ENCODE measurements at regions of chr12 and their contacts with region 1.

Region 1: DNA sequence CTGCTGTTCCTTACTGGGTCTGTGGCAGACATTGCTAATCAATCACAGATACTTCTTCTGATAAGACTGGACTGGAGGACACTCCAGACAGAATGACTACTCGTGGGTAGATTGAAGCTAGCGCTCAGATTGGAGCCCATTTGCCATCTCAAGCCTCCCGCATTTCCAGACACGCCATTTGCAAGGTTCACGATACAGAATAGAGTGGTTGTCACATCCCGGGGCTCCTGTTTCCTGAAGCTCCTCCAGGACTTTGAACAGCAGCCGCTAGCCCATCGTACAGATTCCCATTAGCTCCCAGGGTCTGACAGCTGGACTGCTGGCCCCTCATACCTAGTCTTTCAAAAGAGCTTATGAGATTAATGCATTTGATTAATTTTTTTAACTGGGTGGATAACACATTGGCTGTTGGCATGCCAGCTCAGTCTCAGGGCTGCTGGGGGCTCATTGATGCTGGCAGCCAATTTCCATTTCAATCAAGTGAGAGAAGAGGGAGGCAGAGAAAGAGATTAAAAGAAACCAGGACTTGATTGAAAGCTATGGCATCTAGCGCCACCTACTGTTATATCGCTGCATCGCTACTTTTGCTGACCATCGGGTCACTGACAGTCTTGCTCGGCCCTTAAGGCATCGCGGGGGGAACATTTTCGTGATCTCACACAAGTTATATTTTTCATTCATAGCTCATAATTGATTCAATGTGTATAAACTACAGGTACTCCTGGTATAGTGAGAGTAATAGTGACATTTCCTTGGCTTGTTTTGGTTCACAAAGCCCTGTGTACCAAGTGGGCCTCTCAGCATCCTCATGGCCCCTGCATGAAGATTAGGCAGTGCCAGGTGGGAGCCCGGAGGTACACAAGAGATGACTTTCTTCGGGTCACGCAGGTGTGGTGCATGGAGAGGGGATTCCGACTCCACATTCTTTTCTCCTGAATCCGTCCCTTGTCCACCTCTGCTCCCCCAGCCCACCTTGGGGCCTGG is 78.6 kb downstream of the CCDC60 start:
- DNase-seq: peak; percentile 6
- H3K4me3 Mint-ChIP-seq: no peak overlapping the region
- H3K27ac Mint-ChIP-seq: no peak overlapping the region
- H3K4me1 Mint-ChIP-seq: no peaks in the 10 kb centered on the region
- H3K27me3 Mint-ChIP-seq: no peaks in the 10 kb centered on the region

Region 2: DNA sequence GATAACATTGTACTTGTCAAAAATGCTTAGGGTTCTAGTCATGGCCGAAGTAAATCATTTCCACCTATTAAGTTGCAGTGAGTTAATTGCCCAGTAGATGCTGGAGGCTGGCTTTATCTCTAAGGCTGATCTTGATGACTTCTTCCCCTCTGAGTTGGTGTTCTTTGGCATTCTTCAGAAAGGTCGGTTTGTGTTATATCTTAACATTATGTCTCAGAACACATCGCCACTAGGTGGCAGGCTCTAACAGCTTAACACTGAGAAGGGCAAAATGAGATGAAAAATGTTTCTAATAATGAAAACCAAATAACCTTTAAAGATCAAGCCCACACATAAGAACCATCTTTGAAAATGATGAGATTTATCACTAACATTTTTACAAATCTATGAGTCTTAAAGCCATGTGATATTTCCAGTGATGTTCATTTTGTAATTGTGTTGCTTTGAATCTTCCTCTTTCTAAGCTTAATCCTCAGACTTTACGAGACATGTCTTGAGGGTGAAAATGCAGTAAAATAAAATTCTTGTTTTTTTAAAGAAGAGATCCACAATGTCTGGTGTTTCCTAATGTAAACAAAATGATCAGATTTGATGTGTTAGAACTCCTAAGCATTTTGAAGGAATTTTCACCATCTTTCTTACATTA is 1008.1 kb before region 1 on chr12:
- intact Hi-C with region 1: loop called (anchors 1 kb)
- DNase-seq: peak; percentile 20
- H3K4me3 Mint-ChIP-seq: no peak overlapping the region
- H3K27ac Mint-ChIP-seq: no peak overlapping the region
- H3K4me1 Mint-ChIP-seq: no peaks in the 10 kb centered on the region
- H3K27me3 Mint-ChIP-seq: no peaks in the 10 kb centered on the region

Region 3: GRCh38 chr12:118714051-118714460 is 699.0 kb before region 1 on chr12:
- intact Hi-C with region 1: loop called (anchors 5 kb)
- DNase-seq: no peak
- H3K4me3 Mint-ChIP-seq: no peak overlapping the region
- H3K27ac Mint-ChIP-seq: no peak overlapping the region
- H3K4me1 Mint-ChIP-seq: no peaks in the 10 kb centered on the region
- H3K27me3 Mint-ChIP-seq: no peaks in the 10 kb centered on the region

Region 4: GRCh38 chr12:118979763-118980406 is 433.2 kb before region 1 on chr12:
- intact Hi-C with region 1: loop called (anchors 2 kb)
- DNase-seq: no peak
- H3K4me3 Mint-ChIP-seq: no peak overlapping the region
- H3K27ac Mint-ChIP-seq: no peak overlapping the region
- H3K4me1 Mint-ChIP-seq: no peaks in the 10 kb centered on the region
- H3K27me3 Mint-ChIP-seq: peaks cover 13% of the 10 kb centered on the region

Region 5: GRCh38 chr12:119115296-119115905 is 297.7 kb before region 1 on chr12:
- intact Hi-C with region 1: loop called (anchors 1 kb)
- DNase-seq: no peak
- H3K4me3 Mint-ChIP-seq: no peak overlapping the region
- H3K27ac Mint-ChIP-seq: no peak overlapping the region
- H3K4me1 Mint-ChIP-seq: no peaks in the 10 kb centered on the region
- H3K27me3 Mint-ChIP-seq: no peaks in the 10 kb centered on the region

Measured in activated T-helper 1 cell treated with anti-CD3 and anti-CD28 coated beads, Interleukin-12 subunit alpha, Interleukin-12 subunit beta, Interleukin-2, Interleukin-4 antibody, amounts not matched to agents 30 ng/mL and 10 ng/mL and 1 ng/mL, durations not matched to agents 14 hours and 24 hours and 36 hours (primary cell).